Endothelial cell of umbilical vein (primary cell): ENCODE measurements at regions of chr11 and their contacts with region 1.

Region 1: DNA sequence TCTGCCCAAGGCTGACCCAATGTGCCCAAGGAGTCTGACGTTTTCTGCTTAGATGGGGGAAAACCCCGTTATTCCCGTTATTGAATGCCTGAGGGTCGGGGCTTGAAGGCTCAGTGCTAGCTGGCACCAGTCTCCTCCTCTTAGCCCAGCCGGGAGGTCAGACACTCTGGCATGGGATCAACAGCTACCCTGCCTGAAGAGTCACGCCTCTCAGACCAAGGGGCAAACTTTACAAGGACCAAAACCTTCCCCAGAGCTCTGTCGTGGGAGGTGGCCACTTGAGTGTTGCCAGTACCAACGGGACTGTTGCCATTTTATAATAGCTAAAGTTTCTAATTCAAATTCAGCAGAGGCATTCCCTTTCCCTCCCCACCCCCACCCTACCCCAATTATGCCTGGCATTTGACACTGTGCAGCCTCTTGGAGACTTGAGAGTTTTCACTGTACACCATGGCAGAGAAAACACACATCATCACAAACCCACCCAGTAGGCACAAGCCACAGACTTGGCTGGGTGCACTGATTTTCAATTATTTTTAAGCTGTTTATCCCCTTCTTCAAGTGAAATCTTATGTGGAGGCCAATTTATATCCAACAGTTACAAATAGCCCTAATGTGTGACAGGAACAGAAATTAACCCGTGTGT is 137.5 kb upstream of the SYT13 start:
- DNase-seq: no peak
- H3K4me3 ChIP-seq: no peak overlapping the region
- H3K27ac ChIP-seq: no peak overlapping the region
- H3K4me1 ChIP-seq: no peaks in the 10 kb centered on the region
- H3K27me3 ChIP-seq: peaks cover 0 to 3% of the 10 kb centered on the region in 2 experiments
- CTCF ChIP-seq: no peak
- POLR2A ChIP-seq: no peak

Region 2: GRCh38 chr11:45457649-45458048 is 34.1 kb after region 1 on chr11:
- CTCF ChIA-PET with region 1: no interaction called
- POLR2A ChIA-PET with region 1: no interaction called
- dilution Hi-C with region 1: no loop called
- intact Hi-C with region 1: no loop called
- DNase-seq: no peak
- H3K4me3 ChIP-seq: no peak overlapping the region
- H3K27ac ChIP-seq: no peak overlapping the region
- H3K4me1 ChIP-seq: no peaks in the 10 kb centered on the region
- H3K27me3 ChIP-seq: no peaks in the 10 kb centered on the region
- CTCF ChIP-seq: no peak
- POLR2A ChIP-seq: no peak

Region 3: DNA sequence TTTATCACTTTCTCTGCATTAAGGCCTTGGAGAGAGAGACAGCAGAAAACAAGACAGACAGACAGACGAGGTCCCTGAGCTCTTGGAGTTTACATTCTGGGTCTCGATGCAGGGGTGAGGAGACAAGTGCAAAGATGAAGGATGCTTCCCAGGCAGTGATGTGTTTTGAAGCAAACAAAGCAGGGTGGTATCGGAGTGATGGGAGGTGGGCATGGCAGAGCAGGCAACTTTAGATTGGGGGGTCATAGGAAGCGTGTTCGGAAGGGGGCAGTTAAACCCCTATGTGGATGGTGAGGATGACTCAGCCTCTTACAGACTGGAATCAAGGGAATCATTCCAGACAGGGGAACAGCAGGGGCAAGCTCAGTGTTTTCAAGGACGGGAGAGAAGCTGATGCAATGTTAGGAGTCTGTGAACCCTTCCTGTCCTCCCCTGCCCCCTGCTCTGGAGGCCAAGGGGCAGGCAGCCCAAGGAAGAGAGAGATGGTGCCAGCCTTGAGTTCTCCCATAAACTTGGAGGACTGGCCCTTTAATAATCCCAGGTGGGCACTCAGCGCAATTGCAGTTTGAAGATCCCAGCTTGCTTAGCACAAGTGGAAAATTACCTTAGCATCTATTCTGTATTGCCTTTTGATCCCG is 61.6 kb after region 1 on chr11:
- CTCF ChIA-PET with region 1: no interaction called
- POLR2A ChIA-PET with region 1: no interaction called
- dilution Hi-C with region 1: no loop called
- intact Hi-C with region 1: loop called (anchors 10 kb)
- DNase-seq: no peak
- H3K4me3 ChIP-seq: no peak overlapping the region
- H3K27ac ChIP-seq: no peak overlapping the region
- H3K4me1 ChIP-seq: no peaks in the 10 kb centered on the region
- H3K27me3 ChIP-seq: peaks cover 0 to 1% of the 10 kb centered on the region in 2 experiments
- CTCF ChIP-seq: no peak
- POLR2A ChIP-seq: no peak